Left ventricle myocardium inferior (tissue), 1 donor: ENCODE measurements at regions of chr3 and their contacts with region 1.

Region 1: GRCh38 chr3:48465531-48466378 is 19.2 kb downstream of the ATRIP start:
- DNase-seq: peak; percentile 96
- H3K4me3 ChIP-seq: peak overlapping the region; percentile 72
- H3K27ac ChIP-seq: peak overlapping the region; percentile 99
- H3K4me1 ChIP-seq: peaks cover 64% of the 10 kb centered on the region
- H3K27me3 ChIP-seq: no peaks in the 10 kb centered on the region
- CTCF ChIP-seq: peak; percentile 81

Region 2: GRCh38 chr3:48548729-48549705 is 83.3 kb after region 1 on chr3:
- intact Hi-C with region 1: loop called (anchors 10 kb)
- DNase-seq: peak; percentile 89
- H3K4me3 ChIP-seq: no peak overlapping the region
- H3K27ac ChIP-seq: no peak overlapping the region
- H3K4me1 ChIP-seq: peaks cover 7% of the 10 kb centered on the region
- H3K27me3 ChIP-seq: no peaks in the 10 kb centered on the region
- CTCF ChIP-seq: peak; percentile 97